ENCODE measurements at regions of chr16 and their contacts with region 1.

Region 1: GRCh38 chr16:71564155-71564967 is 12.5 kb downstream of the TAT start:
- DNase-seq: no peak
- ATAC-seq: peak; percentile 26
- H3K4me3 ChIP-seq: peak overlapping the region; percentile 54 to 76 (median 69)
- H3K27ac ChIP-seq: peak overlapping the region; percentile 85
- H3K4me1 ChIP-seq: peaks cover 37% of the 10 kb centered on the region
- H3K27me3 ChIP-seq: no peaks in the 10 kb centered on the region; a peak in 1 of 5 replicates
- CTCF ChIP-seq: no peak
- EP300 ChIP-seq: no peak
- POLR2A ChIP-seq: no peak
- RAD21 ChIP-seq: no peak

Region 2: DNA sequence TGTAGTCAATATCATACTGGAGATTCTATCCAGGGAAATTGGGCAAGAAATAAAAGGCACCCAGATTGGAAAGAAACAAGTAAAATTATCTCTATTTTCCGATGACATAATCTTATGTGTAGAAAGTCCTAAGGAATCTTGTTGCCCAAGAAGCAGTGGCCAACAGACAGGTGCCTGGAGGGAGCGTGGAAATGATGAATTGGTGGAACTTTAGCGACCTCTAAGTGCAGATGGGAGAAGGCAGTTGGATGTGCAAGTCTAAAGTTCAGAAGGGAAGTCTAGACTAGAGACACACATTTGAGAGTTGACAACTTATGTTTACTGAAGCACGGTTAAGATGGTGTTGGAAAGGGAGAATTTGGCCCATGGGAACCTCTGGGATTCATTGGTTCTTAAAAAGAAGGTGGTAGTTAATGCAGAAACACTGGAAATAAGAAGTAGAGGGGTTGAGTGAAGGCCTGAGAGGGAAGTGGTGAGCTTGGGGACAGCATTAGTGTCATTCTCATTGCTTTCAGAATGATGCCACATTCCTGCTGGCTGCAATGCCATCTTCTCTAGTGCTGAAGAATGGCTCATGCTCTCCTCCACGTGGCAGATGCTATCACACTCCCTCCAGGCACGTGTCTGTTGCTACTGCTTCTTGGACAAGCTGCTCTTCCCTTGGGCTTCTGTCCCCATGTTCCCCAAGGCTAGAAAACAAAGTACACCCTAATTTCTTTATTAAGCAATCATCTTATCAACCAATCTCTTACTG is 11.5 kb before region 1 on chr16:
- CTCF ChIA-PET with region 1: no interaction called
- POLR2A ChIA-PET with region 1: interaction called, 15 read pairs
- in situ Hi-C with region 1: no loop called
- intact Hi-C with region 1: no loop called
- DNase-seq: peak; percentile 64
- ATAC-seq: peak; percentile 93
- H3K4me3 ChIP-seq: peak overlapping the region in 1 of 3 experiments; percentile 13; a peak in 1 of 6 replicates
- H3K27ac ChIP-seq: no peak overlapping the region
- H3K4me1 ChIP-seq: peaks cover 29% of the 10 kb centered on the region
- H3K27me3 ChIP-seq: no peaks in the 10 kb centered on the region
- CTCF ChIP-seq: peak; percentile 84
- EP300 ChIP-seq: no peak
- POLR2A ChIP-seq: no peak
- RAD21 ChIP-seq: peak; percentile 55; the same call in 1 of the 2 replicates

Region 3: DNA sequence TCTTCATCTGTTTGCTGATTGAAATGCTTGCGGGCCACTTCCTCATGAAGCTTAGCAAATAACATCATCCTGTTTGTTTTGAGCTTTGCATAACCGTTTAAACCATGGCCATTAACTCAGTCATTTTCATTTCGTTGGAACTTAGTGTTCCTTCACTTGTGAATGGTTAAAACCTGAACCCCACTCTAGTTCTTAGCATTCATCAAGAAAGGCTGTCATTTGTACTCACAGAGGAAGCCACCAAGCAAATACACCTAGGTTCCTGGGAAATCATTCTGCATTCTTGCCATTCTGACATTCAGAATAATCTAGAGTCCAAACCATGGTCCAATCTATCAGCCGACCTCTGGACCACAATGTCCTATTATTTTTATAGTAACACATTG is 20.9 kb after region 1 on chr16:
- CTCF ChIA-PET with region 1: no interaction called
- POLR2A ChIA-PET with region 1: interaction called, 93 read pairs
- in situ Hi-C with region 1: no loop called
- intact Hi-C with region 1: no loop called
- DNase-seq: peak; percentile 83
- ATAC-seq: peak; percentile 58
- H3K4me3 ChIP-seq: peak overlapping the region in 2 of 3 experiments; percentile 25 to 35; a peak in 2 of 6 replicates
- H3K27ac ChIP-seq: peak overlapping the region; percentile 90
- H3K4me1 ChIP-seq: peaks cover 77% of the 10 kb centered on the region
- H3K27me3 ChIP-seq: no peaks in the 10 kb centered on the region
- CTCF ChIP-seq: no peak
- EP300 ChIP-seq: peak in 1 of 2 experiments; percentile 88; a peak in 2 of 4 replicates
- POLR2A ChIP-seq: 0 out of 4 replicates have a peak, but pooled peaks of 1 of the 2 experiments have one; percentile 18
- RAD21 ChIP-seq: no peak

Region 4: GRCh38 chr16:71594000-71594646 is 29.8 kb after region 1 on chr16:
- CTCF ChIA-PET with region 1: no interaction called
- POLR2A ChIA-PET with region 1: interaction called, 82 read pairs
- in situ Hi-C with region 1: no loop called
- intact Hi-C with region 1: no loop called
- DNase-seq: peak; percentile 93
- ATAC-seq: peak; percentile 87
- H3K4me3 ChIP-seq: peak overlapping the region in 2 of 3 experiments; percentile 9 to 23; a peak in 2 of 6 replicates
- H3K27ac ChIP-seq: peak overlapping the region; percentile 92
- H3K4me1 ChIP-seq: peaks cover 90% of the 10 kb centered on the region
- H3K27me3 ChIP-seq: no peaks in the 10 kb centered on the region
- CTCF ChIP-seq: peak; percentile 25; the same call in 1 of the 2 replicates
- EP300 ChIP-seq: peak in 1 of 2 experiments; percentile 92; a peak in 2 of 4 replicates
- POLR2A ChIP-seq: peak in 1 of 2 experiments; percentile 58; a peak in 1 of 4 replicates
- RAD21 ChIP-seq: 0 out of 2 replicates have a peak, but pooled peaks have one; percentile 18

Region 5: GRCh38 chr16:71600822-71601221 is 36.5 kb after region 1 on chr16:
- CTCF ChIA-PET with region 1: interaction called, 38 read pairs
- POLR2A ChIA-PET with region 1: interaction called, 142 read pairs
- in situ Hi-C with region 1: loop called (anchors 5 kb)
- intact Hi-C with region 1: no loop called
- DNase-seq: peak; percentile 50
- ATAC-seq: peak; percentile 99
- H3K4me3 ChIP-seq: peak overlapping the region in 1 of 3 experiments; percentile 54; a peak in 2 of 6 replicates
- H3K27ac ChIP-seq: peak overlapping the region; percentile 16
- H3K4me1 ChIP-seq: peaks cover 59% of the 10 kb centered on the region
- H3K27me3 ChIP-seq: no peaks in the 10 kb centered on the region
- CTCF ChIP-seq: peak; percentile 83
- EP300 ChIP-seq: no peak
- POLR2A ChIP-seq: no peak
- RAD21 ChIP-seq: peak; percentile 36; the same call in 1 of the 2 replicates

Region 6: GRCh38 chr16:71645453-71645852 is 81.1 kb after region 1 on chr16:
- CTCF ChIA-PET with region 1: interaction called, 8 read pairs
- POLR2A ChIA-PET with region 1: interaction called, 3 read pairs
- in situ Hi-C with region 1: no loop called
- intact Hi-C with region 1: loop called (anchors 1 kb)
- DNase-seq: peak; percentile 67
- ATAC-seq: peak; percentile 90
- H3K4me3 ChIP-seq: no peak overlapping the region
- H3K27ac ChIP-seq: no peak overlapping the region
- H3K4me1 ChIP-seq: no peaks in the 10 kb centered on the region
- H3K27me3 ChIP-seq: no peaks in the 10 kb centered on the region
- CTCF ChIP-seq: peak; percentile 83
- EP300 ChIP-seq: no peak
- POLR2A ChIP-seq: no peak
- RAD21 ChIP-seq: peak; percentile 78

Region 7: DNA sequence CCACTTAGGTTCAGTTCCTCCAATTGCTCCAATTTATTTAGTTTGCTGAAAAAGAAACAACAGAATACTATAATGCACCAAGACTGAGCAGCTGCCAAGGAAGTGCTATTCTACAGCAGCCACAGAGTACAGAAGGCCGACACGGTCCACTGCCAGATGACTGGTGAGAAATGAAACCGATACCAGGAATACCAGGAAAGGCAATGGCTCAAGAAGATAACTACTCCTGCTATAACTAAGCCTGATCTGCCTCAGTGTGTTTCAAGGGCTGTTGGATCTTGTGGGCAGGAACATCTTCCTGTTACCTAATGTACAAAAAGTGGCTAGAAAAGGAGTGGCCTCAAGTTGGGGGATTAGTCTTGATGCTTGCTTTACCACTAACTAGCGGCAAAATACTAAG is 94.4 kb after region 1 on chr16:
- CTCF ChIA-PET with region 1: no interaction called
- POLR2A ChIA-PET with region 1: no interaction called
- in situ Hi-C with region 1: no loop called
- intact Hi-C with region 1: no loop called
- DNase-seq: no peak
- ATAC-seq: no peak
- H3K4me3 ChIP-seq: no peak overlapping the region
- H3K27ac ChIP-seq: no peak overlapping the region
- H3K4me1 ChIP-seq: no peaks in the 10 kb centered on the region
- H3K27me3 ChIP-seq: no peaks in the 10 kb centered on the region
- CTCF ChIP-seq: no peak
- EP300 ChIP-seq: no peak
- POLR2A ChIP-seq: no peak
- RAD21 ChIP-seq: no peak

Measured in HepG2 (cell line).